ENCODE measurements at regions of chr9 and their contacts with region 1.

Region 1: GRCh38 chr9:18260521-18260920 is 213.4 kb upstream of the ADAMTSL1 start:
- DNase-seq: no peak
- H3K4me3 ChIP-seq: no peak overlapping the region
- H3K27ac ChIP-seq: no peak overlapping the region
- H3K4me1 ChIP-seq: peaks cover 0 to 5% (median 2%) of the 10 kb centered on the region in 4 donors
- H3K27me3 ChIP-seq: no peaks in the 10 kb centered on the region
- CTCF ChIP-seq: no peak

Region 2: GRCh38 chr9:19018201-19018600 is 757.7 kb after region 1 on chr9:
- intact Hi-C with region 1: loop called (anchors 5 kb)
- DNase-seq: no peak
- H3K4me3 ChIP-seq: no peak overlapping the region
- H3K27ac ChIP-seq: no peak overlapping the region
- H3K4me1 ChIP-seq: peaks cover 0 to 1% (median 0%) of the 10 kb centered on the region in 4 donors
- H3K27me3 ChIP-seq: no peaks in the 10 kb centered on the region
- CTCF ChIP-seq: no peak

Measured in tibial artery (tissue), 4 donors.